K562 (cell line): ENCODE measurements at regions of chr1 and their contacts with region 1.

Region 1: DNA sequence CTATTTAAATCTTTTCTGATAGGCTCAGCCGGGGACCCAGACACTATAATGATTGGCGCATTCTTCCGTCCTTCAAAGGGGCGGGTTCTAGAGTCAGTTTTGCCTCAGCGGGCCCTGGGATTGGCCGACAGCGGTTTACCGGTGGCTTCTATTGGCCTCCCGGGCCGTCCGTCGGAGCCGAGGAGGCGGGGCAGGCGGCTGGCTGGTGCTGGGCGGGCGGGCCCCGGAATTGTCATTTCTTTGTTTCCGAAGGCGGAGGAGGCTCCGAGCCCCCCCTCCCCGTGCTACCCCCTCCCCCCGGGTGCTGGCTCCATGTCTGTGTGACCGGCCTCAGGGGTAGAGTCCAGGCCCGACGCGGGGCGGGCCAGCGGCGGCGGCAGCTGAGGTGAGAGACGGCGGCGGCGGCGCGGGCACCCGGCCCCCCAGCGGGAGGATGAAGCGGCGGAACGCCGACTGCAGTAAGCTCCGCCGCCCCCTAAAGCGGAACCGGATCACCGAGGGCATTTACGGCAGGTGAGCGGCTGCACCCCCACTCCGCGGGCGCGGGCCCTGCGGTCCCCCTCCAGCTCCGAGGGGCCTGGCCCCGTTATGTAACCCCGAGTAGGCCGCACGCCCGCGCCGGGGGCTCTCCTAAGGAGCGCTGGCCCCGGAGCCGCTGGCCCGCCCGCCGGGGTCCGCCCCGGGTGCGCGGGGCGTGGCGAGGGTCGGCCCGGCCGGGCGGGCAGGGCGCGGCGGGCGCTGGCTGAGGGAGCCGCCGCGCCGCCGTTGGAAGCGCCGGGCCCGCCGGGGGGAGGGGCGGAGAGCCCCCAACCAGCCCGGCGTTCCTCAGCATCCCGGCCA is at the start of gene MACO1:
- DNase-seq: peak; percentile 95 to 100 (median 98)
- ATAC-seq: peak; percentile 91
- H3K4me3 ChIP-seq: peak within 1 kb of the TSS; percentile 78
- H3K27ac ChIP-seq: peak within 1 kb of the TSS; percentile 92
- H3K4me1 ChIP-seq: peaks cover 26 to 42% of the 10 kb centered on the region in 2 experiments
- H3K27me3 ChIP-seq: no peaks in the 10 kb centered on the region
- CTCF ChIP-seq: no peak
- EP300 ChIP-seq: no peak
- POLR2A ChIP-seq: no peak
- RAD21 ChIP-seq: peak in 1 of 2 experiments; percentile 8; a peak in 1 of 4 replicates
- polyA plus RNA-seq, gene MACO1: 4.6 to 5.1 TPM

Region 2: GRCh38 chr1:25442178-25442577 is 11.3 kb after region 1 on chr1:
- CTCF ChIA-PET with region 1: no interaction called
- POLR2A ChIA-PET with region 1: interaction called, 15 read pairs
- in situ Hi-C with region 1: no loop called
- intact Hi-C with region 1: no loop called
- DNase-seq: no peak
- ATAC-seq: peak; percentile 39
- H3K4me3 ChIP-seq: no peak overlapping the region
- H3K27ac ChIP-seq: no peak overlapping the region
- H3K4me1 ChIP-seq: peaks cover 3 to 18% of the 10 kb centered on the region in 2 experiments; a peak in 3 of 5 replicates
- H3K27me3 ChIP-seq: no peaks in the 10 kb centered on the region
- CTCF ChIP-seq: peak in 1 of 3 experiments; percentile 28; a peak in 2 of 6 replicates
- EP300 ChIP-seq: no peak
- POLR2A ChIP-seq: no peak
- RAD21 ChIP-seq: peak; percentile 17 to 48; a peak in 3 of 4 replicates

Region 3: GRCh38 chr1:25450891-25451290 is 20.0 kb after region 1 on chr1:
- CTCF ChIA-PET with region 1: no interaction called
- POLR2A ChIA-PET with region 1: interaction called, 14 read pairs
- in situ Hi-C with region 1: no loop called
- intact Hi-C with region 1: no loop called
- DNase-seq: no peak
- ATAC-seq: no peak
- H3K4me3 ChIP-seq: no peak overlapping the region
- H3K27ac ChIP-seq: no peak overlapping the region
- H3K4me1 ChIP-seq: peaks cover 0 to 6% of the 10 kb centered on the region in 2 experiments; a peak in 2 of 5 replicates
- H3K27me3 ChIP-seq: no peaks in the 10 kb centered on the region
- CTCF ChIP-seq: no peak
- EP300 ChIP-seq: no peak
- POLR2A ChIP-seq: no peak
- RAD21 ChIP-seq: no peak

Region 4: DNA sequence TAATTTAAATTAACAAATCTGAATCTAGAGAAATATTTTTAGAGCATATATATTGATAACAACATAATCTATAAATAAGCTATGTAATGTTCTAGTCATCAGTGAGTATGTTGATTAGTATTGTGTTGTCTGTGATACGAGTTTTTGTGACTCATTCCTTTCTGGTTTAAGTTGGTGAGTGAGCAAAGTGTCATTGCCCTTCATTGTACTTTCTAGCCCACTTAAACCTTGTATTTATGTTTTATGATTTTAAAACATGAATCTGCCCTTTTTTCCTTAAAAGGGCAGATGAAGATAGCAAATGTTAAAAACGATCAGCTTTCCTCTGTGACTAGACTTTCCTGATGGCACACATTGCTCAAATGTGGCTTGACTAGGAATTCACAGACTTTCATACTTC is 38.3 kb after region 1 on chr1:
- CTCF ChIA-PET with region 1: no interaction called
- POLR2A ChIA-PET with region 1: no interaction called
- in situ Hi-C with region 1: no loop called
- intact Hi-C with region 1: loop called (anchors 5 kb)
- DNase-seq: no peak
- ATAC-seq: no peak
- H3K4me3 ChIP-seq: no peak overlapping the region
- H3K27ac ChIP-seq: no peak overlapping the region
- H3K4me1 ChIP-seq: peaks cover 7 to 19% of the 10 kb centered on the region in 2 experiments; a peak in 4 of 5 replicates
- H3K27me3 ChIP-seq: no peaks in the 10 kb centered on the region
- CTCF ChIP-seq: no peak
- EP300 ChIP-seq: no peak
- POLR2A ChIP-seq: no peak
- RAD21 ChIP-seq: no peak